ENCODE measurements at regions of chrX and their contacts with region 1.

Region 1: DNA sequence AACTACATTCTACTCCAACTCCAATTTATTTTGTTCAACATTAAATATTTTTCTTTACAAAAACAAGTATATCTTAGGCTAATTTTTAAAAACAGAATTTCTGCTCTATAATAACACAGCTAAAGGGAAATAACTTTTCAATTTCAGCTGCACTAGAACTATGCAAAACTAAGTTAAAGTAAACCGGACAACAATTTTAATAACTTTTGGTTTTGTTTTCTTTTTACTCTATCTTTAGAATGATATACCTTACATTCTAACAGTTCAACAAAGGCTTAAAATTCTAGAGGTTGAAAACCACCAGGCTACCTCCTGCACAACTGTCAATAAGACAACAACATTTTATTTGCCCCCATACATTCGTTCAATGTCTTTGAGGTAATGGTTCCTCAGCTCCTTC is 18.7 kb upstream of the KCNE5 start:
- DNase-seq: no peak
- H3K4me3 ChIP-seq: no peak overlapping the region
- H3K27ac ChIP-seq: no peak overlapping the region
- H3K4me1 ChIP-seq: no peaks in the 10 kb centered on the region
- H3K27me3 ChIP-seq: no peaks in the 10 kb centered on the region
- CTCF ChIP-seq: no peak

Region 2: GRCh38 chrX:109862433-109862832 is 218.7 kb after region 1 on chrX:
- CTCF ChIA-PET with region 1: no interaction called
- POLR2A ChIA-PET with region 1: interaction called, 19 read pairs
- intact Hi-C with region 1: no loop called
- DNase-seq: peak; percentile 41 to 57
- H3K4me3 ChIP-seq: no peak overlapping the region
- H3K27ac ChIP-seq: no peak overlapping the region
- H3K4me1 ChIP-seq: 0 out of 2 replicates have a peak, but pooled peaks cover 10% of the 10 kb centered on the region
- H3K27me3 ChIP-seq: no peaks in the 10 kb centered on the region
- CTCF ChIP-seq: no peak